ENCODE measurements at regions of chr7 and their contacts with region 1.

Region 1: DNA sequence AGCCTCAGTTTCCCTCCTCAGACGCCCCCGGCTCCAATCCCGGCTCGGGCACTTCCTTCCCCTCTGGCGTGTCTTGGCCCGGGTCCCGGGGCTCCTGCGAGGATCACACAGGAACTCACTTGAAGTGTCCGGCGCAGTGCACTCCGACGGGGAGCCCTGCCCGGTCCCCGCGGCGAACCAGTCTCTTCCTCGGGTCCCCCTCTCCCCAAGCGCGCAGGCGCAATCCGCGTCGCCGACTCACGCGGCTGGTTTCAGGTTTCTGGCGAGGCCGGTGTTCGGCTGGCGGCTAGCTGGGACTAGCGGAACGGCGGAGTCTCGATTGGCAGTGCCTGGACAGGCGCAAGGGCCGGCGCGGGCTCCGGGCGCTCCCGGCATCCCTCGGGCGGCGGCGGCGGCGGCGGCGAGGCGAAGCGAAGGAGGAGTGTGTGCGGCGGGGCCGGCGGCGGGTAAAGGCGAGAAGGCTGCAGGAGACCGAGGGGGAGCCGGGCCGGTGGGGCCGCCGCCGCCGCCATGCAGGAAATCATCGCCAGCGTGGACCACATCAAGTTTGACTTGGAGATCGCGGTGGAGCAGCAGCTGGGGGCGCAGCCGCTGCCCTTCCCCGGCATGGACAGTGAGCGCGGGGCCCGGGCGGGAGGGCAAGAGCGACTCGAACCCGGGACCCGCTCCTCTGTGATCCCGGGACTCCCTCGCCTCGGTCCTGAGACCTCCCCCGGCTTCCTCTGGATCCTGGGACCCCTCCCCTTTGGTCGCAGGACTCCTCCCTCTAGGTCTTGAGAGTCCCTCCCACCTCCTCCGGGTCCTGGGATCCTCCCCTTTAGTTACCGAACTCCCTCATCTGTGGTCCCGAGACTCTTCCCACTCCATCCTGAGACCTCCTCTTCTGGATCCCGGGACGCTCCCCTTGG is at the starts of genes CPSF4 and PTCD1:
- DNase-seq: peak; percentile 96
- H3K4me3 Mint-ChIP-seq: peak within 1 kb of the TSS; percentile 99
- H3K27ac Mint-ChIP-seq: peak within 1 kb of the TSS; percentile 95
- H3K4me1 Mint-ChIP-seq: peaks cover 35% of the 10 kb centered on the region
- H3K27me3 Mint-ChIP-seq: no peaks in the 10 kb centered on the region
- total RNA-seq, gene CPSF4: 57.7 to 60.3 TPM
- total RNA-seq, gene PTCD1: 7.4 TPM

Region 2: DNA sequence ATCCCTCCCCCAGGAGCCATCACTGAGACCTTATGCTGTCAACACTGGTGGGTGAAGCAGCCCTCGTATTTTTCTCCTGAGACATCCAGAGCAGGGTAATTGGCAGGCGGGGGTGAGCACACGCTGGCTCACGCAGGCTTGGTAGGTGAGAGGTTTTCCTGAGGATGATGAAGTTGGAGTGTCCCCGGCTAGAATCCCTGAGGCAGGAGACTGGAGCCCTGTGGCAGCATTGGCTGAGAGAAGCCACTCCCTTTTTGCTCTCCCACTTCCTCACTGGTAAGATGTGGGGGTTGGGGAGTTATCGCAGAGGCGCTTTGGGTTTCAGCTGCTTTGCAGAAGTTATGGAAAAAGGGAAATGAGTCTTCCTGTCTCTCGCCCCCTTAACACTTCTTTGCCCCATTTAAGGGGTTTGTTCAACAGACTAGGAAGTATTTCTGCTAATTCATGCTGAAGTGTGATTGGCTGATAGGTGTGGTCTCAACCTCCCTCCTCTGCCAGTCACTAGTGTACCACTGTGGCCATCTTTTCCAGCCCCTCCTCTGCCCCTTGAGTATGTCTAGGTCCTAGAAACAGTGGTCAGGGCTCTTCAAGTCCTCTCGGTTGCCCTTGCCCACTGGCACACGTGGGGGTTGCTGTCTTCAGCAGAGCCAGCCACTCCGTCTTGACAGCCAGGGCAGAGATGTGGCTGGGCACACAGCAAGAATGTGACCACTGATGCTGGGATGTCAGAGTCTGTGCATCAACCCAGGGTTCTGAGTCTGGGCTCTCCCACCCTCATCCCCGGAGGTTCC is 58.6 kb before region 1 on chr7:
- CTCF ChIA-PET with region 1: no interaction called
- POLR2A ChIA-PET with region 1: interaction called, 3 read pairs
- intact Hi-C with region 1: loop called (anchors 2 kb)
- DNase-seq: peak; percentile 68
- H3K4me3 Mint-ChIP-seq: peak overlapping the region; percentile 81
- H3K27ac Mint-ChIP-seq: peak overlapping the region; percentile 97
- H3K4me1 Mint-ChIP-seq: peaks cover 66% of the 10 kb centered on the region
- H3K27me3 Mint-ChIP-seq: no peaks in the 10 kb centered on the region